ENCODE measurements at regions of chr11 and their contacts with region 1.

Region 1: DNA sequence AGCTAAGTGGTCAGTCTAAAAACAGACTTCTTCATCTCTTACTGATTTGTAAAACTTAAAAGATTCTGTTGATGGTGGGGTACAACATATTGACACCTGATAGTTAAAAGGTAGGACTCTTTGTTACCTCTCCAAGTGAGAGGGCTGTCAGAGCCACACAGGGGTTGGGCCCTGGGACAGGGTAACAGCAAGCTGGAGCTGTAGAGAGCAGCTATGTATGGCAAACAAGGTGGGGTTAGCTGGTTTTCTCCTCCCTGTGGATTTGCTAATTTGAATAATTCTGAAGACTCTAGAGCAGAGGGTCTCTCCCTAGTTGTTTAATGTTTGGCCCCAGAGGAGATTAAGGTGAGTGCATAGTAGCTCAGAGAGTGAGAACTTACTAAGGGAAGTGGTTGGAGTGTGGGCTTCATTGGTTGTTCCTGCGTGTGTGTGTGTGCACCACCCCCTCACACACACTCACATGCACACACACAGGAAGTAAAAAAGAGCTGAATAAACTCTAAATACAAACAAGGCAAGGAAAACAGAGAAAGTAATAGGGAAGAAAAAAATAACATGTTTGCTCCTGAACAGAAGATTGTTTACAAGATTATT is 9.2 kb upstream of the GAS2 start:
- DNase-seq: no peak
- ATAC-seq: peak; percentile 92
- H3K4me3 ChIP-seq: no peak overlapping the region
- H3K27ac ChIP-seq: peak overlapping the region; percentile 42; the same call in 1 of the 2 replicates
- H3K4me1 ChIP-seq: peaks cover 6% of the 10 kb centered on the region
- H3K27me3 ChIP-seq: no peaks in the 10 kb centered on the region
- CTCF ChIP-seq: no peak
- EP300 ChIP-seq: peak in 1 of 2 experiments; percentile 46; a peak in 2 of 4 replicates
- POLR2A ChIP-seq: no peak
- RAD21 ChIP-seq: no peak

Region 2: DNA sequence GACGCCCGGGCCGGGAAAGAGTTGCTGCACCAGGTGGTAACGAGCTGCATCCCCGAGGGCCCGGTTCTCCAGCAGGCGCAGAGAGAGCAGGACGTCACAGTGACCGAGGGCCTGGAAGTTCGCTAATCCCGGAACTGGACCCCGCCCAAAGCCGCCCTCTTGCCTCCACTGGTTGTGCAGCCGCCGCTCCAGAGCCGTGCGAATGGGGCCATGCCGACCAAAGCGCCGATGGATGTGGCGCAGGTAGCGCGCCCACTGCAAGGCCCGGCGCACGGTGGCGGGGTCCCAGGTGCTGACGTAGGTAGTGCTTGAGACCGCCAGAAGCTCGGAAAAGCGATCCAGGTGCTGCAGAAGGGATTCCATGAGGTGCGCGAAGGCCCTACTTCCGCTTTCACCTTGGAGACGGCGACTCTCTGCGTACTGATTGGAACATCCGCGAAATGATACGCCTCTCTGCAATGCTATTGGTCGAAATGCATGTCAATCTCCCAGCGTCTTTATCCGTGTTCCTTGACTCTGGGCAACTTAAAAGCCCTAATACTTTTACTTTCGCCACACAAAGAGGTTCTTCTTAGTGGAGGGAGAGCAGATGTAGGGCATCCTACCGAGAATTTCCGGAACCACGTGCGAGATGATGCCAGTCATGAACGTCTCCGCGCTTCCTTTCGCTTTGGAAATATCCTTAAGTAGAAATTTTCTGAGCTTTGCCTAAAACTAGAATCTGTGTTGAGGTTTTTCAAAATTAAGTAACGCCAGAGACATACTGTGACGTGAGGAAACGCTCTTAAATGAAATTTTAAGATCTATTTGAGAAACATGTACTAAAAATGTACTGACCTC is 31.5 kb before region 1 on chr11 and contains the start of gene FANCF:
- CTCF ChIA-PET with region 1: interaction called, 21 read pairs
- POLR2A ChIA-PET with region 1: interaction called, 8 read pairs
- RAD21 ChIA-PET with region 1: interaction called, 19 read pairs
- SMC1A ChIA-PET with region 1: interaction called, 23 read pairs
- in situ Hi-C with region 1: no loop called
- intact Hi-C with region 1: no loop called
- DNase-seq: peak; percentile 100
- ATAC-seq: peak; percentile 95
- H3K4me3 ChIP-seq: peak within 1 kb of the TSS; percentile 85
- H3K27ac ChIP-seq: peak within 1 kb of the TSS; percentile 90
- H3K4me1 ChIP-seq: peaks cover 6% of the 10 kb centered on the region; the same call in 1 of the 2 replicates
- H3K27me3 ChIP-seq: no peaks in the 10 kb centered on the region
- CTCF ChIP-seq: no peak
- EP300 ChIP-seq: no peak
- POLR2A ChIP-seq: peak; percentile 81
- RAD21 ChIP-seq: no peak
- polyA plus RNA-seq, gene FANCF: 1.6 to 3.4 TPM

Region 3: DNA sequence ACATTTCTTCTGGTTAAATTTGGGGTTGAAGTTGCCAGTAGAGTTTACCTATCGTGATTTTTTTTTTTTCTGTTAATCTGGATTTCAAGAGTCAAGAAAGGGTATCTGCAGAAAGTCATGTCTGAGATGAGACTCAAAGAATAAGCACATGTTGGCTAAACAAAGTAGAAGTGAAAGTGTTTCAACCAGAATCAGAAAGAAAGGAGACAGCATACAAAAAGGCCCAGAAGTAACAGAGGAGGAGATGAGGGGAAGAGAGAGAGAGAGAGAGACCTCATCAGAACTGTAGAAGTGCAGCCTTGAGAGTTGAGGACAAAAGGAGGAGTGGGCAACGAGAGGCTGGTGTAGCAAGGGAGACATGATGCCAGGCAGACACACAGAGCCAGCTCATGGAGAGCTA is 117.5 kb after region 1 on chr11:
- CTCF ChIA-PET with region 1: interaction called, 3 read pairs
- POLR2A ChIA-PET with region 1: interaction called, 5 read pairs
- RAD21 ChIA-PET with region 1: interaction called, 14 read pairs
- SMC1A ChIA-PET with region 1: interaction called, 14 read pairs
- in situ Hi-C with region 1: no loop called
- intact Hi-C with region 1: no loop called
- DNase-seq: no peak
- ATAC-seq: peak; percentile 64
- H3K4me3 ChIP-seq: 0 out of 2 replicates have a peak overlapping the region, but pooled peaks have one; percentile 26
- H3K27ac ChIP-seq: peak overlapping the region; percentile 45
- H3K4me1 ChIP-seq: peaks cover 3% of the 10 kb centered on the region; the same call in 1 of the 2 replicates
- H3K27me3 ChIP-seq: no peaks in the 10 kb centered on the region
- CTCF ChIP-seq: no peak
- EP300 ChIP-seq: no peak
- POLR2A ChIP-seq: no peak
- RAD21 ChIP-seq: no peak

Measured in GM12878 (cell line).